Motor neuron (in vitro differentiated cells): ENCODE measurements at regions of chrX and their contacts with region 1.

Region 1: DNA sequence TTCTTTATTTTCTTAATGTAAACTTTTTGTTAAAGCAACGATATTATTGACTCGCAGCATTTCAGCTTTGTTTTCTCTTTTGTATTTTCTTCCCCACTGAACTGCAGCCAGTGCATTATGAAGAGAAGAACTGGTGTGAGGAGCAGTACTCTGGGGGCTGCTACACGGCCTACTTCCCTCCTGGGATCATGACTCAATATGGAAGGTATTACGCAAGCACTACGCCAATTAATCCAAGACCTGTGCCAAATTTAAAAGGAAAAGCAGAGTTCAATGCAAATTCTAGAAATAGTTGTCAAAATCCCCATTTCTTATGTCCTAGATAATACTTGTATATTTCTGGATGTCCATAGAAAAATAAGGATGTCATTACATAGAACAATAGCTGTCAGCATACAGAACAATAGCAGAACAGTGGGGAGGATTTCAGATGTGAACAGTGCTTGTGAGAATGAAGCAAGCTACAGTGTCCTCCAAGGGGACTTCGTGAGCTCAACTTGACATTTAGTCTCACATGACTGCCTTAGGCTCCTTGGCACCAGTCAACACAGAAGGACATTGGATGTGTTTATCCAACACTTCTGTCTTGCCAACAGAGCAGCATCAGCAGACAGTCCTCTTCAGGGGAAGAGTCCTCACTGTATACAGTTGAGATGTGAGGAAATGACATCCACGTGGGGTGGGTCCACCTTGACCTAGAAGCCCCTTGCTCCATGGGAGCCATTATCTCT is 85.9 kb downstream of the MAOA start:
- ATAC-seq: no peak
- H3K4me3 ChIP-seq: no peak overlapping the region
- H3K27ac ChIP-seq: no peak overlapping the region
- H3K4me1 ChIP-seq: no peaks in the 10 kb centered on the region

Region 2: DNA sequence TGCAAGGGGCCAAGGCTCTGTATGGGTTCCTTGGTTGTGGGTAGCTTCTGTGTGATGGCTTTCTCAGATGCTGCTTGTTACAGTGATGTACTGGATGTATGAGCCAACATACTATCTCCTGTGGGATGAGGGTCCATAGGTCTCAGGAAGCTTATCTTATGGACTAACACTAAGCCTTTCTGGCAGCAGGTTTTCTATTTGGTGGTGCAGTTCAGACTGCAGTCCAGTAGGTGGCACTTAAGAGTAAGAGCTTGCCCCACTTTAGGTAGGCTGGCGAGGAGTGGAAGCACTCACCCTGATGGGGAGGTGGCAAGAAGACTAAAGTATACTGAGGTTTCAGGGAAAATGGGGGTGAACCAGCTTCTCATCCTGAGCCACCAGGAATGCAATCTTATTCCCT is 392.6 kb before region 1 on chrX:
- in situ Hi-C with region 1: loop called in 1 of 9 experiments (anchors 25 kb)
- ATAC-seq: peak in 3 of 8 experiments; percentile 29 to 59 (median 57)
- H3K4me3 ChIP-seq: no peak overlapping the region
- H3K27ac ChIP-seq: no peak overlapping the region
- H3K4me1 ChIP-seq: no peaks in the 10 kb centered on the region

Region 3: DNA sequence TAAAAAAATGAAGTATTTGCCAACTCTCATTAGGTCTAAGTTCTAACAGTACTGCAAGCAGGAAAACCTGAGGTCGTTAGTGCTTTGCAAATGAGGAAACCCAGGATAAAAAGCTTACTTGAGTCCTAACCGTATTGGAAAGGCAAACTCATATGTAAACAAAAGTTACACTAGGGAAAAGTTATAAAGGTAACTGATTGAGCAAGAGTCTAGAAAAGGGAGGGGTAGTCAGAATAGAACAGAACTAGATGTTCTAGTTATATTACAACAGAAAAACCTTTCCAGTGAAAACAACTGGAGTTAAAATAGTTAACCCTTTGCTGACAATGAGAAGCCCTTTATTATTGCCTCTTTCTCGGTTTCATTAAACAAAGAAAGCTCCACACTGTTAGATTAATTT is 152.3 kb before region 1 on chrX:
- in situ Hi-C with region 1: loop called in 1 of 9 experiments (anchors 25 kb)
- ATAC-seq: no peak
- H3K4me3 ChIP-seq: no peak overlapping the region
- H3K27ac ChIP-seq: no peak overlapping the region
- H3K4me1 ChIP-seq: no peaks in the 10 kb centered on the region

Region 4: GRCh38 chrX:44637282-44637681 is 895.3 kb after region 1 on chrX:
- in situ Hi-C with region 1: no loop called
- ATAC-seq: no peak
- H3K4me3 ChIP-seq: no peak overlapping the region
- H3K27ac ChIP-seq: no peak overlapping the region
- H3K4me1 ChIP-seq: no peaks in the 10 kb centered on the region